CD4-positive, alpha-beta T cell (primary cell): ENCODE measurements at regions of chr4 and their contacts with region 1.

Region 1: DNA sequence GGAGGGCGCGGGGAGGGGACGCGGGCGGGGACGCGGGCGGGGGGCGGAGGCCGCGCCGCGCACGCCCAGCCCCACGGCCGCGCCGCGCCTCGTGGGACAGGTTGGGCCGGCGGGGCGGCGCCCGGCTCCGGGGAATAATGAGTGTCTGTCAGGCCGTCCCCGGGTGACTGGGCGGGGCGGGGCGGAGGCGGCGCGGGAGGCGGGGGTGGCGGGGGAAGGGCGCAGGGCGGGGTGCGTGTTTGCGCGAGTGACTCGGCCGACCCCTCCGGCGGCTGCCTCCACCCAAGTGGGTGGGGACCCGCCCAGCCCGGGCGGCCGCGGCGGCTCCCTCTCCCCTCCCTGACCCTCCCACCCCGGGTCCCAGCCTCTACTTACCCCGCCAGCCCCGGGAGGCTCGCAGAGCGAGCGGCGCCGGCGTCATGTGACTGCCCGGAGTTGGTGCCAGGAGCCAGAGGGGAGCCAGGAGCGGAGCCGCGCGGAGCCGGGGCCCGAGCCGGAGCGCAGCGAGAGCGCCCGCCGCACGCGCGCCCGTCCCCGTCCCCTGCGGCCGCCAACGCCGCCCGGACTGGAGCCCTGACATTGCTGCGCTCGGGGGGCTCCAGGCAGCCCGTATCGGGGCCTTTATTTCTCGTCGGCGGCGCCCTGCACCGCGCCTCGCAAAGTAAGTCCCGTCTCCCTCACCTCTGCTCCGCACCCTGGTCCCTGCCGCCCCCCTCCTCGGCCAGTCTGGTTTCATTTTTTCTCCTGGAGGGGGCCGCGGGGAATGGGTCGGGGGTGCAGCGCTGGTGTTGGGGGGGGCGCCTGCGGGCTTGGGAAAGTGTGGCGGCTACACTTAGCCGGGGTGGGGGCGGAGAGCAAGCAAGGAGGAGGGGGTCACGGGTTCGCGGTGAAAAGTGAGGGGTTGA is at the start of gene KLF3:
- DNase-seq: peak; percentile 87 to 98 (median 94)
- ATAC-seq: peak; percentile 63
- H3K4me3 ChIP-seq: peak within 1 kb of the TSS; percentile 89
- H3K4me3 Mint-ChIP-seq: peak within 1 kb of the TSS; percentile 99
- H3K27ac ChIP-seq: peak within 1 kb of the TSS; percentile 82 to 94
- H3K27ac Mint-ChIP-seq: peak within 1 kb of the TSS; percentile 91
- H3K4me1 ChIP-seq: peaks cover 39% of the 10 kb centered on the region
- H3K4me1 Mint-ChIP-seq: peaks cover 65% of the 10 kb centered on the region
- H3K27me3 ChIP-seq: no peaks in the 10 kb centered on the region
- H3K27me3 Mint-ChIP-seq: no peaks in the 10 kb centered on the region
- CTCF ChIP-seq: no peak
- total RNA-seq, gene KLF3: 203 to 204 TPM

Region 2: GRCh38 chr4:38132107-38132673 is 531.9 kb before region 1 on chr4:
- CTCF ChIA-PET with region 1: no interaction called
- POLR2A ChIA-PET with region 1: no interaction called
- intact Hi-C with region 1: loop called in 1 of 2 experiments (anchors 2 kb)
- DNase-seq: peak; percentile 35 to 90 (median 54)
- ATAC-seq: peak; percentile 75
- H3K4me3 ChIP-seq: peak overlapping the region; percentile 6
- H3K4me3 Mint-ChIP-seq: peak overlapping the region; percentile 85
- H3K27ac ChIP-seq: peak overlapping the region; percentile 37 to 59
- H3K27ac Mint-ChIP-seq: peak overlapping the region; percentile 91
- H3K4me1 ChIP-seq: peaks cover 54% of the 10 kb centered on the region
- H3K4me1 Mint-ChIP-seq: peaks cover 53% of the 10 kb centered on the region
- H3K27me3 ChIP-seq: no peaks in the 10 kb centered on the region
- H3K27me3 Mint-ChIP-seq: no peaks in the 10 kb centered on the region
- CTCF ChIP-seq: no peak

Region 3: GRCh38 chr4:38290366-38290765 is 373.7 kb before region 1 on chr4:
- CTCF ChIA-PET with region 1: no interaction called
- POLR2A ChIA-PET with region 1: no interaction called
- intact Hi-C with region 1: no loop called
- DNase-seq: no peak
- ATAC-seq: no peak
- H3K4me3 ChIP-seq: no peak overlapping the region
- H3K4me3 Mint-ChIP-seq: no peak overlapping the region
- H3K27ac ChIP-seq: no peak overlapping the region
- H3K27ac Mint-ChIP-seq: no peak overlapping the region
- H3K4me1 ChIP-seq: no peaks in the 10 kb centered on the region
- H3K4me1 Mint-ChIP-seq: no peaks in the 10 kb centered on the region
- H3K27me3 ChIP-seq: no peaks in the 10 kb centered on the region
- H3K27me3 Mint-ChIP-seq: no peaks in the 10 kb centered on the region
- CTCF ChIP-seq: no peak

Region 4: GRCh38 chr4:38328989-38329729 is 334.9 kb before region 1 on chr4:
- CTCF ChIA-PET with region 1: no interaction called
- POLR2A ChIA-PET with region 1: interaction called, 11 read pairs
- intact Hi-C with region 1: no loop called
- DNase-seq: peak in 6 of 14 experiments; percentile 20 to 66 (median 48)
- ATAC-seq: peak; percentile 86
- H3K4me3 ChIP-seq: no peak overlapping the region
- H3K4me3 Mint-ChIP-seq: peak overlapping the region; percentile 43
- H3K27ac ChIP-seq: peak overlapping the region in 1 of 2 donors; percentile 32
- H3K27ac Mint-ChIP-seq: peak overlapping the region; percentile 88
- H3K4me1 ChIP-seq: peaks cover 65% of the 10 kb centered on the region
- H3K4me1 Mint-ChIP-seq: peaks cover 77% of the 10 kb centered on the region
- H3K27me3 ChIP-seq: no peaks in the 10 kb centered on the region
- H3K27me3 Mint-ChIP-seq: no peaks in the 10 kb centered on the region
- CTCF ChIP-seq: no peak

Region 5: GRCh38 chr4:38509551-38509950 is 154.5 kb before region 1 on chr4:
- CTCF ChIA-PET with region 1: no interaction called
- POLR2A ChIA-PET with region 1: interaction called, 19 read pairs
- intact Hi-C with region 1: loop called (anchors 2 kb)
- DNase-seq: peak in 12 of 14 experiments; percentile 30 to 87 (median 46)
- ATAC-seq: peak; percentile 93
- H3K4me3 ChIP-seq: peak overlapping the region; percentile 65
- H3K4me3 Mint-ChIP-seq: peak overlapping the region; percentile 82
- H3K27ac ChIP-seq: peak overlapping the region; percentile 60 to 78
- H3K27ac Mint-ChIP-seq: peak overlapping the region; percentile 86
- H3K4me1 ChIP-seq: peaks cover 63% of the 10 kb centered on the region
- H3K4me1 Mint-ChIP-seq: peaks cover 84% of the 10 kb centered on the region
- H3K27me3 ChIP-seq: no peaks in the 10 kb centered on the region
- H3K27me3 Mint-ChIP-seq: no peaks in the 10 kb centered on the region
- CTCF ChIP-seq: no peak

Region 6: GRCh38 chr4:38605753-38606586 is 58.1 kb before region 1 on chr4:
- CTCF ChIA-PET with region 1: no interaction called
- POLR2A ChIA-PET with region 1: no interaction called
- intact Hi-C with region 1: loop called in 1 of 2 experiments (anchors 5 kb)
- DNase-seq: no peak
- ATAC-seq: no peak
- H3K4me3 ChIP-seq: no peak overlapping the region
- H3K4me3 Mint-ChIP-seq: no peak overlapping the region
- H3K27ac ChIP-seq: no peak overlapping the region
- H3K27ac Mint-ChIP-seq: peak overlapping the region; percentile 13
- H3K4me1 ChIP-seq: peaks cover 29% of the 10 kb centered on the region
- H3K4me1 Mint-ChIP-seq: peaks cover 59% of the 10 kb centered on the region
- H3K27me3 ChIP-seq: no peaks in the 10 kb centered on the region
- H3K27me3 Mint-ChIP-seq: no peaks in the 10 kb centered on the region
- CTCF ChIP-seq: no peak

Region 7: DNA sequence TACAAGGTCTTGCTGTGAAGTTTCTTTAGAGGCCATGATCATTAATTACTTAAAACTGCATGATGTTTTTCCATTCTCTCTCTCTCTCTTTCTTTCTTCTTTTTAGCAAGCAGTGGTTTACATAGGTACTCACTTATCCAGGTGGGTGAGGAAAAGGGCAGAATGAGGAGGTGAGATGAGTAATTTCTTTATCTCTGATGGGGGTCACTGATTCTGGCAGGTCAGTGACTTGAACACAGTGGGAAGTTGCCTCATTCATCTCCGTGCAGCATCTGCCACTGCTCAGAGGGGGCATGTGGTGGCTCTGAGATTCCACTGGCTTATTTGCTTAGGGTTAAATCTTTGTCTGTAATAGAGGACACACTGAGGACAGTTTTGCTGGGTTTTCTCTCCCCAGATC is 266.2 kb after region 1 on chr4:
- CTCF ChIA-PET with region 1: no interaction called
- POLR2A ChIA-PET with region 1: no interaction called
- intact Hi-C with region 1: no loop called
- DNase-seq: no peak
- ATAC-seq: no peak
- H3K4me3 ChIP-seq: no peak overlapping the region
- H3K4me3 Mint-ChIP-seq: no peak overlapping the region
- H3K27ac ChIP-seq: no peak overlapping the region
- H3K27ac Mint-ChIP-seq: no peak overlapping the region
- H3K4me1 ChIP-seq: no peaks in the 10 kb centered on the region
- H3K4me1 Mint-ChIP-seq: no peaks in the 10 kb centered on the region
- H3K27me3 ChIP-seq: no peaks in the 10 kb centered on the region
- H3K27me3 Mint-ChIP-seq: no peaks in the 10 kb centered on the region
- CTCF ChIP-seq: no peak

Region 8: DNA sequence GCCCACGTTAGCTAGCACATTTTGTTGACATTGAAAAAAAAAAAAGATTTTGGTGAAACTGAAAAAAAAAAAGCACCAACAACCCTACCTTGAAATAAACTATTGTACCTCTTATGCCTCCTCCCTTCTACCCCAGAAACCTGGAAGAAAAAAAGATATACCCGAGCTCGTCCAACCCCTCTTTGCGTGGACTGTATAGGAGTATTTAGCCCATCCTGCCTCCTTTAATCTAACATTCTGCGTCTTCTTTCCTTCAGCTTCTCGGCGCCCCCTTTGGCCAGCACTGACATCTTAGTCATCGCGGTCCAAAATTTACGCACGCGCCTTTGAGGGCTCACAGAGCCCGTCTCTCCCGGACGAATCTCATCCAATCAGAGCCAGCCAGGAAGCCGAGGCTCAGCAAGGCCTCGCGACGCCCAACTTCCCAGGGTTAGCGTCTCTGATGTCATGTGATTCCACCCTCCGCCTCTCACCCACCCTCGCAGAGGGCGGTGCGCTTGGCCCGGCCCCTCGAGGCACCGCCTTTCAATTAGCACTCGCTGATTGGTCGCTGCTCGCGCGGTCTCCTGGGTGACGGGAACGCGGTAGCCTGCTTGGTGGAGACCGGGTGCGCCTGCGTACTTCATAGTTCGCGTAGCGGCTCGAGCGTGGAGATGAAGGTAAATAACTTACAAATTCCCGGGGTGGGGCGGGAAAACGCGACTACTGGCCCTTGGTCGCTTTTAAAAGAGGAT is 518.0 kb after region 1 on chr4 and contains the start of gene WDR19:
- CTCF ChIA-PET with region 1: no interaction called
- POLR2A ChIA-PET with region 1: no interaction called
- intact Hi-C with region 1: loop called in 1 of 2 experiments (anchors 10 kb)
- DNase-seq: peak; percentile 95 to 100 (median 98)
- ATAC-seq: peak; percentile 93
- H3K4me3 ChIP-seq: peak within 1 kb of the TSS; percentile 94
- H3K4me3 Mint-ChIP-seq: no peak within 1 kb of the TSS
- H3K27ac ChIP-seq: peak within 1 kb of the TSS; percentile 21 to 53
- H3K27ac Mint-ChIP-seq: no peak within 1 kb of the TSS
- H3K4me1 ChIP-seq: peaks cover 16% of the 10 kb centered on the region
- H3K4me1 Mint-ChIP-seq: peaks cover 9% of the 10 kb centered on the region
- H3K27me3 ChIP-seq: no peaks in the 10 kb centered on the region
- H3K27me3 Mint-ChIP-seq: peaks cover 3% of the 10 kb centered on the region
- CTCF ChIP-seq: peak; percentile 61
- total RNA-seq, gene WDR19: 14.5 to 16.7 TPM

Region 9: GRCh38 chr4:40275065-40275730 is 1611.1 kb after region 1 on chr4:
- CTCF ChIA-PET with region 1: no interaction called
- POLR2A ChIA-PET with region 1: no interaction called
- intact Hi-C with region 1: no loop called
- DNase-seq: no peak
- ATAC-seq: no peak
- H3K4me3 ChIP-seq: no peak overlapping the region
- H3K4me3 Mint-ChIP-seq: peak overlapping the region; percentile 54
- H3K27ac ChIP-seq: no peak overlapping the region
- H3K27ac Mint-ChIP-seq: peak overlapping the region; percentile 10
- H3K4me1 ChIP-seq: peaks cover 20% of the 10 kb centered on the region
- H3K4me1 Mint-ChIP-seq: peaks cover 52% of the 10 kb centered on the region
- H3K27me3 ChIP-seq: no peaks in the 10 kb centered on the region
- H3K27me3 Mint-ChIP-seq: no peaks in the 10 kb centered on the region
- CTCF ChIP-seq: no peak